Ascending aorta (tissue), 2 donors: ENCODE measurements at regions of chrX and their contacts with region 1.

Region 1: DNA sequence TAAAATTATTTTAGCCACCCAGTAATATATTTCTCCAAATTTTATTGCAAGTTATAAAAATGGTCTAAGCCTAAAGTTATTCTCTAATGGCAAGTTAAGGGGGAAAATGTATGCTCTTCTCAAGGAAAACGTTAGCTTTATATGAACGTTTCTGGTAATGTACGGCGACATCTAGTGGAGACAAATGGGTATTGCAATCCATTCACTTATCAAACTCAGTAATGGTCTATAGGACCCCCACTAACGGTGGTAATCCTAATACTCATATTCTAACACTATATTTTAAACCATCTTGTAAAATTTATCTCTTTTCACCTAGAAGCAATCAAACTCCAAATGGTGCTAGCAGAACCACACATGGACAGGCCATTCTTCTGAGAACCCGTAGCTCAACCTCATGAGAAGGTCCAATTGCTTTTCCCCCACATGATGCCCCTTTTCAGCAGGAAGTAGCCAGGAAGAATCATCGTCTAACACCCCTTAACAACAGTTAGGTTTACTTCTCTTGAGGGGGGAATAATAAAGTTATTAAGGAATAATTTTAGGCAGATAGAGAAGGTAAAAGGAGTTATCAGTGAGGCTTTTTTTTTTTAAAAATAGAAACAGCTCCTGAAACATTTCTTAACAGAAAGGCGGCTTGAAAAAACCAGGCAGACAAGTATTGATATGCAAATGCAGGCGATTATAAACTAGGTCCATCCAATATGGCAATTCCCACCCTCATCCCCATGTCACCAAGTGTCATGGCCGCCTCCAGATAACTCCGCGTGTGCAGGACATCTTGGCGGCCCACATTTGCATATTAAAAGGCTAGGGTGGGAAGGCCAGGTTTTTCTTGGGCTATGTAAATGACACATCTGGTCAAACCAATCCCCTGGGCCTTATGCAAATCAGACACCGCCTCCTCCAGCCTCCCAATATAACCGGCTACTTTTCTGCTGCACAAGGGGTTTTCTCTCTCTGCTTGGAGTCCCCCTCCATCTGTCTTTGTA is 35.0 kb downstream of the NUDT11 start:
- DNase-seq: no peak
- H3K4me3 ChIP-seq: no peak overlapping the region
- H3K27ac ChIP-seq: no peak overlapping the region
- H3K4me1 ChIP-seq: no peaks in the 10 kb centered on the region
- H3K27me3 ChIP-seq: no peaks in the 10 kb centered on the region
- CTCF ChIP-seq: peak; percentile 9 to 86 (median 78)

Region 2: DNA sequence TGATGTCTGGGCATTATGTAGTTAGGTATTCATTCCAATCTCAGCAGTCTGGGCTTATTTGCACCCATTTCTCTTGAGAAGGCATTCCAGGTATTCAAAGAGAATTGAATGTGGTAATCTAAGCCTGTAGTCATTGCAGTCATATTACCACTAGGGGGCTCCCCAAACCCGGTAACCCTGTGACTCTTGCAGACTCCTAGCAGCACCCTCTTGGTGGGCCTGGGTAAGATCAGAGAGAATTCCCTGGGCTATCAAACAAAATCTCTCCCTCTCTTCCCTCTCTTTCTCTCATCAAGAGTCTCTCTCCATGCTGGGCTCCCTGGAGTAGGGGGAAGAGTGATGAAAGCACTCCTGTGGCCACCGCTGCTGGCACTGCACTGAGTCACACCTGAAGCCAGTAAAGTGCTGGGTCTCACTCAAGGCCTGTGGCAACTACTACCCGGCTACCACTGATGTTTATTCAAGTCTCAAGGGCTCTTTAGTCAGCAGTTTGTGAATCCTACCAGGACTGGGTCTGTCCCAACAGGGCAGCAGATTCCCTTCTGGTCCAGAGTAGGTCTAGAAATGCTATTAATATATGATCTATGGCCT is 316.4 kb before region 1 on chrX:
- intact Hi-C with region 1: loop called (anchors 5 kb)
- DNase-seq: no peak
- H3K4me3 ChIP-seq: no peak overlapping the region
- H3K27ac ChIP-seq: no peak overlapping the region
- H3K4me1 ChIP-seq: no peaks in the 10 kb centered on the region
- H3K27me3 ChIP-seq: no peaks in the 10 kb centered on the region
- CTCF ChIP-seq: peak in 2 of 3 experiments; percentile 17 to 47

Region 3: DNA sequence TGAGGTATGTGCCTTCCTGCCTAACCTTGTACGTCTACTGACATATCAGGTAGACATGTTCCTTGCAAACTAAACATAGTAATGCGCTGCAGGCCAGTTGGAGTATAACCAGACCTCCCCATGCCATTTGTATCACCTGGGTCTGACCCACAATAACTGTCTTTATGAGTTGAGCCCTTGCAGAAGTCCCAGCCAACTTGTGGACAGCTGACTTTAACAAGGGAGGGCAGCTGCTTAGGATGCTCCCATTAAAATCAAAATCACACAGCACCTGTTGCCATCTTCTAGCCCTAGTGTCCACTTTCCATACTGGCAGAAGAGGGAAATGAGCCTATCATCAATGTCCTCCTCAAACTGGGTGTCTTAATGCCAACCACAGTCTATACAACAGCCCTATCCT is 1674.2 kb after region 1 on chrX:
- intact Hi-C with region 1: no loop called
- DNase-seq: no peak
- H3K4me3 ChIP-seq: no peak overlapping the region
- H3K27ac ChIP-seq: no peak overlapping the region
- H3K4me1 ChIP-seq: no peaks in the 10 kb centered on the region
- H3K27me3 ChIP-seq: no peaks in the 10 kb centered on the region
- CTCF ChIP-seq: no peak